PC-9 (cell line): ENCODE measurements at regions of chr2 and their contacts with region 1.

Region 1: GRCh38 chr2:105926960-105927678 is 182.4 kb downstream of the NCK2 start:
- DNase-seq: peak in 1 of 2 experiments; percentile 43
- H3K4me3 ChIP-seq: no peak overlapping the region
- H3K27ac ChIP-seq: no peak overlapping the region
- H3K4me1 ChIP-seq: no peaks in the 10 kb centered on the region
- H3K27me3 ChIP-seq: no peaks in the 10 kb centered on the region
- CTCF ChIP-seq: no peak

Region 2: DNA sequence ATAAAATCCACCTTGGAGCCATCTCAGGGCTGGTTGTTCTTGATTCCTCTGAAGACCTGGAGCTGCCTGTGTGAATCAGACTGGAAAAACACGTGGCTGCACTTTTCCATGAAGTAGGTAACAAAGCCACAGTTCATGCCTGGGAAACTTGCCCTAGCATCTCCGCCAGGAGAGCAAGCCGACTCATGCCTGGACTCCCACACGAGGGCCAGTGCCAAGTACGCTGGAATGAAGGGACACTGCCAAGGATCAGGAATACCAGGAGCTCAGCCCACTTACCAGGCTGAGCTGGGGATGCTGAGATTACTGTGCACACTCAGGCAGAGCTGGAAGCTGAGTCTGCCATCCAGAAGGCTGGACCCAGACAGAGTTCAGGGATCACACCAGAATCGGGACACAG is 517.4 kb before region 1 on chr2:
- CTCF ChIA-PET with region 1: no interaction called
- POLR2A ChIA-PET with region 1: no interaction called
- intact Hi-C with region 1: no loop called
- DNase-seq: no peak
- H3K4me3 ChIP-seq: no peak overlapping the region
- H3K27ac ChIP-seq: no peak overlapping the region
- H3K4me1 ChIP-seq: peaks cover 28% of the 10 kb centered on the region
- H3K27me3 ChIP-seq: no peaks in the 10 kb centered on the region
- CTCF ChIP-seq: no peak

Region 3: GRCh38 chr2:105969555-105969954 is 42.4 kb after region 1 on chr2:
- CTCF ChIA-PET with region 1: no interaction called
- POLR2A ChIA-PET with region 1: no interaction called
- intact Hi-C with region 1: no loop called
- DNase-seq: peak in 1 of 2 experiments; percentile 25
- H3K4me3 ChIP-seq: no peak overlapping the region
- H3K27ac ChIP-seq: no peak overlapping the region
- H3K4me1 ChIP-seq: no peaks in the 10 kb centered on the region
- H3K27me3 ChIP-seq: peaks cover 21% of the 10 kb centered on the region
- CTCF ChIP-seq: peak; percentile 53

Region 4: DNA sequence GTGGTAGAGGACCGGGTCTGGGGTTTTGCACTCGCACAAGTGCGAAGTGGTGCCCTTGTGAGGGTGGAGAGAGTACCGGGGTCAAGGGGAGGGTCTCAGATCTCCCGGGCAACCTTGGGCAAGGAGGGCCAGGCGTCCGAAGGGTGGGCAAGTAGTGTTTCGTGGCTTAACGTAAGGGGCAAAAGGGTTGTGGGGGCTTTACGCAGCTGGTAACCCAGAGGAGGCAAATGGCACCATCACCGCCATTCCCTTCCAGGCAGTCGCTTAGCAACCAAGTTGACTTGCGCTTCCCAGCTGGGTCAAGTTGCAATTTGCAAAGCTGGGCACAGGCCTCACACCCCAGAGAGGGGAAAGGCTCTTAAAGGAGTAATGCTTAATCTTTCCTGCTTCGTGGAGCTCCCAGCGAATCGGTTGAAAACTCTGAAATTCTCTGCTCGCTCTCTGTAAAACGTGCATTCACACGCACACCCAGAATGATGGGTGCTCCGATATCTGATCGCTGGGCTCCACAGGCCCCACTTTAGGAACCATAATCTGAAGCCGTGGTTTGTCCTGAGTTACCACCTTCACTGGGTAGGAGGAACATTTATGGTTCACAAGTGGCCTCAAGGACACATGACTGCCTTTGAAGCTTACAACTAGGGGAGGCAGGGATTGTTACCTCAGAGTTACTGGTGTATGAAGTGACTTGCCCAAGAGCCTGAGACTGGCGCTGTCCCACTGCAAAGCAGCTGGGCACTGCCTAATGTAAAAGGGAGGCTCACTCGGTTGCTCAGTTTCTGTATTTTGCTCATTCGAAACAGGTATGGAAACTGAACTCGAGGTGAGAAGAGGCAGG is 139.1 kb after region 1 on chr2:
- CTCF ChIA-PET with region 1: interaction called, 11 read pairs
- POLR2A ChIA-PET with region 1: no interaction called
- intact Hi-C with region 1: no loop called
- DNase-seq: no peak
- H3K4me3 ChIP-seq: no peak overlapping the region
- H3K27ac ChIP-seq: no peak overlapping the region
- H3K4me1 ChIP-seq: no peaks in the 10 kb centered on the region
- H3K27me3 ChIP-seq: peaks cover 38% of the 10 kb centered on the region
- CTCF ChIP-seq: no peak